B cell (primary cell): ENCODE measurements at regions of chr4 and their contacts with region 1.

Region 1: GRCh38 chr4:337143-337931 is at the start of gene ZNF141:
- DNase-seq: peak; percentile 97
- ATAC-seq: peak; percentile 90
- H3K4me3 ChIP-seq: peak within 1 kb of the TSS; percentile 61 to 90 (median 82)
- H3K4me3 Mint-ChIP-seq: peak within 1 kb of the TSS; percentile 100
- H3K27ac ChIP-seq: peak within 1 kb of the TSS; percentile 91 to 95
- H3K27ac Mint-ChIP-seq: peak within 1 kb of the TSS; percentile 100
- H3K4me1 ChIP-seq: peaks cover 16 to 22% of the 10 kb centered on the region in 2 donors
- H3K4me1 Mint-ChIP-seq: peaks cover 41% of the 10 kb centered on the region
- H3K27me3 ChIP-seq: no peaks in the 10 kb centered on the region
- H3K27me3 Mint-ChIP-seq: no peaks in the 10 kb centered on the region
- CTCF ChIP-seq: no peak
- total RNA-seq, gene ZNF141: 68.1 and 73.0 TPM in 2 replicates

Region 2: GRCh38 chr4:124275-125081 is 212.9 kb before region 1 on chr4 and contains the start of gene ZNF718:
- CTCF ChIA-PET with region 1: interaction called, 3 read pairs
- POLR2A ChIA-PET with region 1: interaction called, 4 read pairs
- intact Hi-C with region 1: loop called (anchors 5 kb)
- DNase-seq: peak; percentile 95
- ATAC-seq: peak; percentile 97
- H3K4me3 ChIP-seq: peak within 1 kb of the TSS; percentile 56 to 88 (median 80)
- H3K4me3 Mint-ChIP-seq: peak within 1 kb of the TSS; percentile 97
- H3K27ac ChIP-seq: peak within 1 kb of the TSS; percentile 70 to 82
- H3K27ac Mint-ChIP-seq: peak within 1 kb of the TSS; percentile 98
- H3K4me1 ChIP-seq: peaks cover 17 to 30% of the 10 kb centered on the region in 2 donors
- H3K4me1 Mint-ChIP-seq: peaks cover 32% of the 10 kb centered on the region
- H3K27me3 ChIP-seq: no peaks in the 10 kb centered on the region
- H3K27me3 Mint-ChIP-seq: no peaks in the 10 kb centered on the region
- CTCF ChIP-seq: no peak
- total RNA-seq, gene ZNF718: 18.0 and 18.2 TPM in 2 replicates

Region 3: DNA sequence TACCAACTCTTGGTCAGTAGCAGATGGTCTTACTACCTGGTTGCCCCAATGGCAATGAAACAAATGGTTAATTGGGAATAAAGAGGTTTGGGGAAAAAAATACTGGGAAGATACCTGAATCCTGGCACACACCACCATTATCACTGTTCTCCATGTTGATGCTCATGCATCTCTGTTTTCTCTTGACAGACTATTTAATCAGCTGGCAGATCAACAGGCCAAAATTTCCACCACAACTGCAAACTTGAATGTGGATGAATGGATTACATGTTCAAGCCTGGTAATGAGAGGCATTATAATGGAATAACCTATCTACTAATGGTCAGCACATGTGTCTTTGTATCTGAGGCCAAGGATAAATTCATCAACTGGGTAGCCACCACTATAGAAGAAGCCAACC is 115.9 kb after region 1 on chr4:
- CTCF ChIA-PET with region 1: no interaction called
- POLR2A ChIA-PET with region 1: no interaction called
- intact Hi-C with region 1: no loop called
- DNase-seq: no peak
- ATAC-seq: no peak
- H3K4me3 ChIP-seq: no peak overlapping the region
- H3K4me3 Mint-ChIP-seq: no peak overlapping the region
- H3K27ac ChIP-seq: no peak overlapping the region
- H3K27ac Mint-ChIP-seq: no peak overlapping the region
- H3K4me1 ChIP-seq: no peaks in the 10 kb centered on the region
- H3K4me1 Mint-ChIP-seq: no peaks in the 10 kb centered on the region
- H3K27me3 ChIP-seq: no peaks in the 10 kb centered on the region
- H3K27me3 Mint-ChIP-seq: no peaks in the 10 kb centered on the region
- CTCF ChIP-seq: no peak

Region 4: DNA sequence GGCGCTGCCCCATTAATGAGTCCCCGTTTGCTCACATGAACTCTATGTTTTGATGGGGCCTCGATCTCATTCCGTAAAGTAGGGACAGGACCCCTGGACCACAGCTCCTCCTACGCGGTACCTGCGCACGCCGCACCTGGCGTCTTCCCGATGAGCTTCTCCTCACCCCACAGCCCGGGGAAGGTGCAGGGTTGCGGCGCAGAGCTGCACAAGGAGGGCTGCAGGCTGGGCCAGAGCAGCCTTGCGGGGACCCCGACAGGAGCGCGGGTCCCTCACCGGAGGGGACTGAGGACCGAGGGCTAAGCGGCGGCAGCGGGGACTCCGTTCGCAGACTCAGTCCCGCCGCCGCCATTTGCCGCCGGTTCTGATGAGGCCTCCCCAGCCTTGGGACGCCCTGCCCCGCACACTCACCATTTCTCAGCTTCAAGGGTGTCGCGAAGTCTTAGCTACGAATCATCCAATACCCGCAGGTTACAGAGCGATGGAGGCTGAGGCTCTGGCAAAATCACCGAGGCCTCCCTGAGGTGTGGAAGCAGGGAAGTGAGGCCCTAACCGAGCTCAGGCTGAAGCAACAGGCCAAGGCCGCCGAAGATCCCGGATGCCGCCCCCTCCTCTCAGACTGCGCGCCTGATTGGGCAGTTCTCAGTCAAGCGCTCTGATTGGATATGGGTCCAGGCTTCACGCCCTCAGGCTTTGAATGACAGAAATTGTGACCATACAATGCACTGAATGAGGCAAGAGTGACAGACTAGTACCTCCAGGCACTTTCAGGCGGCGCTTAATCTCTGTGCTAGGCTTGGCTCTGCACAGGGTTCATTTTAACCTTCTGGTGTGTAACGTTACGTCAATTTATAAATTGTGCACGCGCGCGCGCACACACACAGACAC is 136.5 kb after region 1 on chr4:
- CTCF ChIA-PET with region 1: no interaction called
- POLR2A ChIA-PET with region 1: interaction called, 11 read pairs
- intact Hi-C with region 1: loop called (anchors 1 kb)
- DNase-seq: peak; percentile 98
- ATAC-seq: peak; percentile 98
- H3K4me3 ChIP-seq: peak overlapping the region; percentile 58 to 86 (median 69)
- H3K4me3 Mint-ChIP-seq: peak overlapping the region; percentile 98
- H3K27ac ChIP-seq: peak overlapping the region; percentile 95 to 96
- H3K27ac Mint-ChIP-seq: peak overlapping the region; percentile 98
- H3K4me1 ChIP-seq: peaks cover 9 to 25% of the 10 kb centered on the region in 2 donors
- H3K4me1 Mint-ChIP-seq: peaks cover 39% of the 10 kb centered on the region
- H3K27me3 ChIP-seq: no peaks in the 10 kb centered on the region
- H3K27me3 Mint-ChIP-seq: no peaks in the 10 kb centered on the region
- CTCF ChIP-seq: no peak

Region 5: GRCh38 chr4:663438-664428 is 326.4 kb after region 1 on chr4:
- CTCF ChIA-PET with region 1: no interaction called
- POLR2A ChIA-PET with region 1: no interaction called
- intact Hi-C with region 1: loop called (anchors 5 kb)
- DNase-seq: peak; percentile 78
- ATAC-seq: peak; percentile 87
- H3K4me3 ChIP-seq: peak overlapping the region; percentile 68 to 85 (median 78)
- H3K4me3 Mint-ChIP-seq: peak overlapping the region; percentile 85
- H3K27ac ChIP-seq: peak overlapping the region; percentile 55 to 88
- H3K27ac Mint-ChIP-seq: peak overlapping the region; percentile 89
- H3K4me1 ChIP-seq: peaks cover 9 to 17% of the 10 kb centered on the region in 2 donors
- H3K4me1 Mint-ChIP-seq: peaks cover 11% of the 10 kb centered on the region
- H3K27me3 ChIP-seq: no peaks in the 10 kb centered on the region
- H3K27me3 Mint-ChIP-seq: no peaks in the 10 kb centered on the region
- CTCF ChIP-seq: peak; percentile 31

Region 6: GRCh38 chr4:924107-925096 is 587.1 kb after region 1 on chr4:
- CTCF ChIA-PET with region 1: no interaction called
- POLR2A ChIA-PET with region 1: no interaction called
- intact Hi-C with region 1: loop called (anchors 5 kb)
- DNase-seq: peak; percentile 60
- ATAC-seq: peak; percentile 22
- H3K4me3 ChIP-seq: no peak overlapping the region
- H3K4me3 Mint-ChIP-seq: peak overlapping the region; percentile 51
- H3K27ac ChIP-seq: peak overlapping the region; percentile 89 to 93
- H3K27ac Mint-ChIP-seq: peak overlapping the region; percentile 77
- H3K4me1 ChIP-seq: peaks cover 62 to 77% of the 10 kb centered on the region in 2 donors
- H3K4me1 Mint-ChIP-seq: peaks cover 71% of the 10 kb centered on the region
- H3K27me3 ChIP-seq: no peaks in the 10 kb centered on the region
- H3K27me3 Mint-ChIP-seq: no peaks in the 10 kb centered on the region
- CTCF ChIP-seq: no peak